RWPE1 (cell line): ENCODE measurements at regions of chr1 and their contacts with region 1.

Region 1: DNA sequence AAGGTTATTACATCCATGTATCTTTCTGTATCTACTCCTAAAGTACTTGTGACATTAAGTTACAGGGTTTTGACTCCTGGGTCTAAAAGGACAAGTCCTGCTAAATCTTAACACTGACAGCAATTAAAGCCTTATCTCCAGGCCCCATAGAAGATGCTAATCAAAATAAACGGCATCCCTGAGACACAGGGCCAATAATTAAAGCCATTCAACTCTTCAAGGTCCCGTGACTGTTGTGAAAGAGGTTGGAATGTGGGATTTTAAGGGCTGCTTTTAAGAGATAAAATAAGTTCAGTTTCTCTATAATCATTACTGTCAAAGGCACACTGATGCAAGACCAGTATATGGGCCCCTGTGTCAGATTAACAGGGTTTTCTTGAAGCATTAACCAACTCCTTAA is 8.3 kb downstream of the DNAI4 start:
- DNase-seq: no peak
- H3K27ac ChIP-seq: no peak overlapping the region
- CTCF ChIP-seq: no peak

Region 2: DNA sequence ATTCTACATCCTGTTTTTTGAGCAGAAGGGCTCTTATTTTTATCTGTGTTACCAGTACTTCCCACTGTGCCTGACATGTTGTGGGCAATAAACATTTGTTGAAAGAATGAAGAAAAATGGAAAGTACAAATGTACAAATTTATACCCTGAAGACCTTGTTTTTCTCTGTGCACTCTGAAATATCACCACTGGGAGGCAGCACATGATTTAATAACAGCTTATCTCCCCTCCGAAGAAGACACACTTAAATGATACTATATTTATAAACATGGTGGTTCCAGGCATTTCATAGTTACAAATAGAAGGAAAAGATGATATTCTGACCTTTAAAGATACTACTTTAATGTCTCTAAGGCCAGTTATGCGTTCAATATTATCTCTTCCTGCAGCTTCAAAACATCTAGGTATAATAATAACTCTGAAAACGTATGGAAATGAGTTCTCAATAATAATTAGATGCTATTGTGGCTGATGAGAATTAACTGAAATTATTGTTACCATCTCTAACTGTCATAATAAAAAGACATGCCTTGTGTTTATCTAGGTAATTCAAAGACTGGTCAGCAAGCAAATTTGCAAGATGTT is 151.2 kb before region 1 on chr1:
- CTCF ChIA-PET with region 1: interaction called, 11 read pairs
- POLR2A ChIA-PET with region 1: no interaction called
- DNase-seq: peak; percentile 36
- H3K27ac ChIP-seq: no peak overlapping the region
- CTCF ChIP-seq: peak; percentile 74